Activated CD8-positive, alpha-beta T cell treated with anti-CD3 and anti-CD28 coated beads for 36 hours (primary cell): ENCODE measurements at regions of chr10 and their contacts with region 1.

Region 1: DNA sequence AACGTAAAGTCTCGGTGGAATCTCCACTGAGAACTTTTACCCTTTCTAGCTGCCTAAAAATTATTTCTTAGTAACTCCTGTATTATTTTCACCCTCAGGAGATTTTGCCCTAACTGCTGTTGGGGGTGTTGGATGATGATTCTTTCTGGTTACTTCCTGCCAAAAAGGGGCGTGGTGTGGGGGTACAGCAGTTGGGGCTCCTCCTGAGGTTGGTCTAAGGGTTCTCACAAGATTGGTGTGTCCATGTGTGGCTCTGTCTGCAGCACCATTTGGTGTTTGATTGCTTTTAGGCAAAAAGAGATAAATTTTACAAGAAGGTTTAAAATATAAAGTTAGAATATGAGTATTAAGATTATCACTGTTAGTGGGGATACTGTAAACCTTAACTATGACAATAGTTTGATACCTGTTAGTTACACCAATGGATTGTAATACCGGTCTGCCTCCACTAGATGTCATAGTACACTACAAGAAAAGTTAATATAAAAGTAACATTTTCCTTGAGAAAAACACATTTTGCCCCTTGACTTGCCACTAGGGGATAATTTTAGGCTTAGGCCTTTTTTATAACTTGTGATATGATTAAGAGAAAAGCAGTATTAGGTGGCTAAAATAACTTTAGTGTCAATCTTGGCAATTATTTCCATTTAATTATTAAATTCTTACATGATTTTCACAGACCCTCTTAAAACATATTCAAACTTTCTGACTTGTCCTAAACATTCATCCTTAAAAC is 928.7 kb downstream of the IPMK start:
- DNase-seq: peak; percentile 16
- ATAC-seq: peak; percentile 55
- H3K4me3 Mint-ChIP-seq: no peak overlapping the region
- H3K27ac Mint-ChIP-seq: no peak overlapping the region
- H3K4me1 Mint-ChIP-seq: no peaks in the 10 kb centered on the region
- H3K27me3 Mint-ChIP-seq: no peaks in the 10 kb centered on the region
- CTCF ChIP-seq: peak; percentile 72

Region 2: GRCh38 chr10:57657164-57657765 is 318.3 kb after region 1 on chr10:
- CTCF ChIA-PET with region 1: interaction called, 10 read pairs
- POLR2A ChIA-PET with region 1: no interaction called
- intact Hi-C with region 1: loop called (anchors 2 kb)
- DNase-seq: peak; percentile 51
- ATAC-seq: peak; percentile 69
- H3K4me3 Mint-ChIP-seq: no peak overlapping the region
- H3K27ac Mint-ChIP-seq: no peak overlapping the region
- H3K4me1 Mint-ChIP-seq: no peaks in the 10 kb centered on the region
- H3K27me3 Mint-ChIP-seq: no peaks in the 10 kb centered on the region
- CTCF ChIP-seq: peak; percentile 60

Region 3: GRCh38 chr10:58064714-58065528 is 725.9 kb after region 1 on chr10:
- CTCF ChIA-PET with region 1: no interaction called
- POLR2A ChIA-PET with region 1: no interaction called
- intact Hi-C with region 1: loop called (anchors 10 kb)
- DNase-seq: peak; percentile 16
- ATAC-seq: no peak
- H3K4me3 Mint-ChIP-seq: no peak overlapping the region
- H3K27ac Mint-ChIP-seq: no peak overlapping the region
- H3K4me1 Mint-ChIP-seq: no peaks in the 10 kb centered on the region
- H3K27me3 Mint-ChIP-seq: peaks cover 23% of the 10 kb centered on the region
- CTCF ChIP-seq: peak; percentile 69

Region 4: GRCh38 chr10:58152673-58153263 is 813.8 kb after region 1 on chr10:
- CTCF ChIA-PET with region 1: no interaction called
- POLR2A ChIA-PET with region 1: no interaction called
- intact Hi-C with region 1: loop called (anchors 10 kb)
- DNase-seq: peak; percentile 67
- ATAC-seq: no peak
- H3K4me3 Mint-ChIP-seq: no peak overlapping the region
- H3K27ac Mint-ChIP-seq: no peak overlapping the region
- H3K4me1 Mint-ChIP-seq: no peaks in the 10 kb centered on the region
- H3K27me3 Mint-ChIP-seq: peaks cover 19% of the 10 kb centered on the region
- CTCF ChIP-seq: peak; percentile 68